ENCODE measurements at regions of chr10 and their contacts with region 1.

Region 1: DNA sequence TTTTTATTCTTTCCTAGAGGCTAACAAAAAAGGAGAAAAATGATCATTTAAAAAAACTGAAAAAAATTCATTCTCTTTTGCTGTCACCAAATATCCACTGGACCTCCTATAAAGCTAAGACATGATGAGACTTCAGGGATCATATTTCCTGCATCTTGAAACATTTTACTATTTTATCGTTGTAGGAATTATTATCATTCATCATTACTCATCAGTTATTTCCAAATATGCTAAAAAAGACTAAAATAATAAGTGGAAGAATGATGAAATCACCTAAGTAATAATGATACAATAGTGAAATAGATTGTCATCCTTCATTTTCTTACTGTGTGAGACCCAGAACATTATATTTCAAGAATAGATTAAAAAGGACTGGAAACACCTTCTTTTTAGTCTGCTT is 28.3 kb downstream of the TAF3 start:
- DNase-seq: no peak
- H3K27ac ChIP-seq: no peak overlapping the region
- CTCF ChIP-seq: no peak

Region 2: GRCh38 chr10:7901256-7901655 is 54.7 kb after region 1 on chr10:
- CTCF ChIA-PET with region 1: interaction called, 12 read pairs
- POLR2A ChIA-PET with region 1: no interaction called
- DNase-seq: no peak
- H3K27ac ChIP-seq: no peak overlapping the region
- CTCF ChIP-seq: no peak